Activated B cell treated with CpG ODN at 0.5 μM for 24 hours (primary cell): ENCODE measurements at regions of chr3 and their contacts with region 1.

Region 1: DNA sequence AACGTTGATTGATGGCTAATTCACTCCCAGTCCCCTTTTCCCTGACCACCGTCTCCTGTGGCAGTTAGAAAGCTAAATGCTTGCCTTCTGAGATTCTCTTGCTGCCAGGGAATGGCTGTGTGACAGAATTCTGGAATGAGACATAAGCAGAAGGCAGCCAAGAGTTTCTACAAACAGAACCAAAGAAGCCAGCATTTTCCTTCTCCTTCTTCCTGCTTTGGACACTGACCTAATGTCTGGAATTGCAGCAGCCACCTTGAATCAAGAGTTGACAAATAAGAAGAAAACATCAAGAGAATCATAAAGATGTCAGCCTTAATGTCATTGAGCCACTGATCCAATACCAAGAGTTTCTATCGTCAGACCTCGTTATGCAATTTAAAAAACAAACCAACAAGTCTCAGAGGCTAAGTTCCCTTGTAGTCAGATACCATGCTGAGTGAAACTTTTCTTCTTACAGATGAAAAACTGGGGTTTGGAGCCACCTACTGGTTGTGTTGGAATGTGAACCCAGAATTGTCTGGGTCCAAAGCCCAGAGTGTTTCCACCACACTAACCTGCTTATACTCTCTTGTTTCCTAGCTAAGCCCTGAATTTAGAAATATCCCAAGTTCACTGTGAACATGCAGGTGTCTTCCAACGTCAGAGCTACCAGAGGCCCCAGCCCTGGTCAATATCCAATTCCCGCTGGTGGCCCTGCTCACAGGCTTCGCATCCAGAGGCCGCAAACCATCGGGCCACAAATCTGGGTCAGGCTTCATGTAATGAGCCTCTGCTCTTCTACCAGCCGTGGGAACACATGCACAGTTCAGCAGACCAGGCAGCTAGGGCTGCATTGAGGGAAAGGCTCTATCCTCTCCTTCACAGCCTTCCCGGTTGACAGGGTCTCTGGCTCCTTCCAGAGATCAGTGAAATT is 42.5 kb downstream of the MCF2L2 start:
- DNase-seq: no peak
- ATAC-seq: peak; percentile 81
- H3K4me3 Mint-ChIP-seq: no peak overlapping the region
- H3K27ac Mint-ChIP-seq: no peak overlapping the region
- H3K4me1 Mint-ChIP-seq: peaks cover 15% of the 10 kb centered on the region
- H3K27me3 Mint-ChIP-seq: peaks cover 15% of the 10 kb centered on the region
- CTCF ChIP-seq: peak; percentile 38

Region 2: DNA sequence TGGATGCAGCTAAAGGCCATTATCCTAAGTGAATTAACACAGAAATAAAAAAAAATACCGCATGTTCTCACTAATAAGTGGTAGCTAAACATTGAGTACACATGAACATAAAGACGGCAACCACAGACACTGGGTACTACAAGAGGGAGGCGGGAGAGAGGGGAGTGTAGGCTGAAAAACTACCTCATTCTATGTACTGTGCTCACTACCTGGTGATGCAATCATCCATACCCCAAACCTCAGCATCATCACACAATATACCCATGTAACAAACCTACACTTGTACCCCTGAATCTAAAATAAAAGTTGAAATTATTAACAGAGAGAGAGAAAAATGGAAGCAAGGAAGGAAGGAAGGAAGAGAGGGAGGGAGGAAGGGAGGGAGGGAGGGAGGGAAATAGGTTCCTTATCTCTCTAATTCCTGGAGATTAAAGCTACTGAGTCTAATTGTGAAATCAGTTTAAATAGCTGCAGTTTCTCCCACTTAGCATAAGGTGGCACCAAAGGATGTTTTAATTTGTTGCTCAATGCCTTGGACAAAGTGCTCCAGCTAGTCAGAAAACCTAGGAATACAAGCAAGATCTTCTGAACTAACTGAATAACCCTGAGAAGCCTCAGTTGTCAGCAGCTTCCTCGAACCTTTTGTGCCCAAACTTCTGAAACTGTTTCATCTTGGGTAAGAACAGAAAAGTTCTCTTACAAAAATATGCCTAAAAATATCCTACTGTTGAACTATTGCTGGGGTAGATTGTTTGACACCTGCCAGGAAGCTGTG is 672.0 kb before region 1 on chr3:
- CTCF ChIA-PET with region 1: interaction called, 4 read pairs
- POLR2A ChIA-PET with region 1: no interaction called
- intact Hi-C with region 1: loop called (anchors 1 kb)
- DNase-seq: no peak
- ATAC-seq: peak; percentile 58
- H3K4me3 Mint-ChIP-seq: no peak overlapping the region
- H3K27ac Mint-ChIP-seq: no peak overlapping the region
- H3K4me1 Mint-ChIP-seq: peaks cover 5% of the 10 kb centered on the region
- H3K27me3 Mint-ChIP-seq: peaks cover 5% of the 10 kb centered on the region
- CTCF ChIP-seq: no peak

Region 3: DNA sequence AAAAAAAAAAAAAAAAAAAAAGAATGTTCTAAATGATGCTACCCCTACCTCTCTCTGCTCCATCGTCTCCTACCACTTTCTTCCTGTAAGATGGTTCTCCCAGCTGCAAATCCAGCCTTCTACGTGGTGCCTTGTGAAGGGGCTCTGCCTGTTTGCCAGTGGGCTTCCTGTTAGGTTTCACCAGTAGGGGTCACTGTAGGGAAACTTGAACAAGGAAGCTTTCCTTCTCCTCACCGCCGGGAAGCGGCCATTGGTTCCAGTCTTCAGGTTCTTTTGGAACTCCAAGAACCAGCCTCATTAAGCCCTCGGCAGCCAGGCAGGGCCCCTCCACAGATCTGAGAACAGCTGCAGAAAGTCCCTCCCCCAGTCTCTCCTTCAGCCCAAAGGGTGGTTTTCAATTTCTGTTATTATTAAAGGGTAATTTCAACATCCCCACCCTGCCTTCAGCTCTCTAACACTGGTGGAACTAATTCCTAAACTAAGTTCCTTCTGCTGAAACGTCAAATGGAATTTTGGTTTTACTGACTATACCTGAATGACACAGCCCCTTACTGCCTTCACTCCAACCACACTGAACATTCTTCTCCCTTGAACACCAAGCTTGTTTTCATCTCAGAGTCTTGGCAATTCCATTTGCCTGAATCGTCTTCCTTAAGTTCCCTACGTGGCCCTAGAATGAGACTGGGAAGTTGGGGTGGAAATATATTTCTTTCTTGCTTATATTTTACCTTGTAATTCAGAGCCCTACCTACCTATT is 300.1 kb before region 1 on chr3:
- CTCF ChIA-PET with region 1: no interaction called
- POLR2A ChIA-PET with region 1: no interaction called
- intact Hi-C with region 1: loop called (anchors 1 kb)
- DNase-seq: no peak
- ATAC-seq: no peak
- H3K4me3 Mint-ChIP-seq: no peak overlapping the region
- H3K27ac Mint-ChIP-seq: no peak overlapping the region
- H3K4me1 Mint-ChIP-seq: no peaks in the 10 kb centered on the region
- H3K27me3 Mint-ChIP-seq: no peaks in the 10 kb centered on the region
- CTCF ChIP-seq: no peak

Region 4: GRCh38 chr3:183122257-183122932 is 263.6 kb before region 1 on chr3:
- CTCF ChIA-PET with region 1: interaction called, 174 read pairs
- POLR2A ChIA-PET with region 1: no interaction called
- intact Hi-C with region 1: loop called (anchors 1 kb)
- DNase-seq: no peak
- ATAC-seq: peak; percentile 61
- H3K4me3 Mint-ChIP-seq: no peak overlapping the region
- H3K27ac Mint-ChIP-seq: no peak overlapping the region
- H3K4me1 Mint-ChIP-seq: peaks cover 2% of the 10 kb centered on the region
- H3K27me3 Mint-ChIP-seq: peaks cover 32% of the 10 kb centered on the region
- CTCF ChIP-seq: peak; percentile 76

Region 5: GRCh38 chr3:183188895-183189462 is 197.0 kb before region 1 on chr3:
- CTCF ChIA-PET with region 1: interaction called, 134 read pairs
- POLR2A ChIA-PET with region 1: interaction called, 3 read pairs
- intact Hi-C with region 1: loop called (anchors 1 kb)
- DNase-seq: no peak
- ATAC-seq: peak; percentile 56
- H3K4me3 Mint-ChIP-seq: no peak overlapping the region
- H3K27ac Mint-ChIP-seq: no peak overlapping the region
- H3K4me1 Mint-ChIP-seq: peaks cover 5% of the 10 kb centered on the region
- H3K27me3 Mint-ChIP-seq: peaks cover 33% of the 10 kb centered on the region
- CTCF ChIP-seq: no peak

Region 6: DNA sequence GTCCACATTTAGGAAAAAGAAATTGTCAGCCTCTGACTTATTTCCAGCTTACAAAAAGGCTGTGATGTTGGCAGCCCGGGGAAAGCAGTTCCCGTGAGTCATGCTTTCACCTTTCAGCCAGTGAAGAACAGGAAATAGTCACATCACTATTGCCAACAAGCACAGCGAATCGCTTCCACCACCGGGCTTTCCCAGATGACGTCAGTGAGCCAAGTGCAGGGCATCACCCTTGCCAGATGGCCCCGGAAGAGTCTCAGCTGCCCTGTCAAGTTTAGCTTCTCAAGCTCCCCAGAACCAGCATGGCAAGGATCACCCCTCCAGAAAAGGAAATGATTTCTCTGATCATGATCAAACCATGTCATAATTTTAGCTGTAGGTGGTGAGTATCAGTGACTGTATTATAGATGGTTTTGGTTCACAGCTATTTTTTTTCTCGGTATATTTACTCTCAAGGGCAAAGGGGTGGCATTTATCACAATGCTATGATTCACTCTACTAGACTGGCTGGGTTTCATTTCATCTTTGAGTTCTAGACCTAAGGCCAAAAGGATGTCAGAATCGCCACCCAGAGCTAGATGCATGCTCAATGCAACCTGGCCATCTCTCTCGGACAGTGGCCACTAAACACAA is 100.0 kb before region 1 on chr3:
- CTCF ChIA-PET with region 1: interaction called, 14 read pairs
- POLR2A ChIA-PET with region 1: no interaction called
- intact Hi-C with region 1: loop called (anchors 2 kb)
- DNase-seq: peak; percentile 69
- ATAC-seq: peak; percentile 95
- H3K4me3 Mint-ChIP-seq: peak overlapping the region; percentile 78
- H3K27ac Mint-ChIP-seq: peak overlapping the region; percentile 94
- H3K4me1 Mint-ChIP-seq: peaks cover 43% of the 10 kb centered on the region
- H3K27me3 Mint-ChIP-seq: no peaks in the 10 kb centered on the region
- CTCF ChIP-seq: no peak

Region 7: DNA sequence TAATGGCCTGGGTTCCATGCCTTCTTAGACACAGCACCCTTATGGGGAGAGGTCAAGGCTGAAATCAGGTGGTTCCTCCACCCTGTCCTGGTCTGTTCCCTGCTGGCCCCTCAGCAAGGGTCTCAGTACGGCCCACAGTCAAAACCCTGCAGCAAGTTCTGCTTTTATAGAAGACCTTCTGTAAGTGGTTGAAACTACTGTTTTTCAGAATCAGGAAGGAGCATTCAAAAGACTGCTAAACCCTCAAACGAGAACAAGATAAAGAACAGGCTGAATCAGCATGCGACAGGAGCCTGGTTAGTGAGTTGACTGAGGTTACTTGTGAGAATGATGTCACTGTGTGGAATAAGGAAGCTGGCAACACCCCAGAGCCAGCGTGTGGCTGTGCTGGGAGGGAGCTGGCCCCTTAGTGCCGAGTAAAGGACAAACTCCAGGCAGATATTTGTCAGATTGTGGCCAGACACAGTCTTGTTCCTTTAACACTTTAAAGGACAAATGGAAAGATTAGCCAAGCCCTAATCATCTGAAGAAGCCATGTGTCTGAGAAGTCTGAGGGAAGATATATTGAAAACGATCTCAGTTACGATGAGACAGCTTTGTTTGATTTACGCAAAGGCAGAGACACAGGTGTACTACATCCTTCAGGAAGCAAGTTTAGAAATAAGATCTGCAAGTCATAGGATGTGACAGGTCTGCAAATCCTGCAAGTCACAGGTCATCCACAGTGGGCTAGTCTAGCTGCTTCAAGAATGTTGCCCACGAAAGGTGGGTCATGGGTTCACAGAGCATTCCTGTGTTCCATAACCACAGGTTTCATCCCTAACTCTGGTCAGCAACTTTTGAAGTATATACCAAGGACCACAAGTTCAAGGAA is 78.9 kb before region 1 on chr3:
- CTCF ChIA-PET with region 1: no interaction called
- POLR2A ChIA-PET with region 1: no interaction called
- intact Hi-C with region 1: no loop called
- DNase-seq: no peak
- ATAC-seq: peak; percentile 93
- H3K4me3 Mint-ChIP-seq: peak overlapping the region; percentile 30
- H3K27ac Mint-ChIP-seq: peak overlapping the region; percentile 22
- H3K4me1 Mint-ChIP-seq: peaks cover 12% of the 10 kb centered on the region
- H3K27me3 Mint-ChIP-seq: no peaks in the 10 kb centered on the region
- CTCF ChIP-seq: no peak